Gastrocnemius medialis (tissue), 4 donors: ENCODE measurements at regions of chr17 and their contacts with region 1.

Region 1: DNA sequence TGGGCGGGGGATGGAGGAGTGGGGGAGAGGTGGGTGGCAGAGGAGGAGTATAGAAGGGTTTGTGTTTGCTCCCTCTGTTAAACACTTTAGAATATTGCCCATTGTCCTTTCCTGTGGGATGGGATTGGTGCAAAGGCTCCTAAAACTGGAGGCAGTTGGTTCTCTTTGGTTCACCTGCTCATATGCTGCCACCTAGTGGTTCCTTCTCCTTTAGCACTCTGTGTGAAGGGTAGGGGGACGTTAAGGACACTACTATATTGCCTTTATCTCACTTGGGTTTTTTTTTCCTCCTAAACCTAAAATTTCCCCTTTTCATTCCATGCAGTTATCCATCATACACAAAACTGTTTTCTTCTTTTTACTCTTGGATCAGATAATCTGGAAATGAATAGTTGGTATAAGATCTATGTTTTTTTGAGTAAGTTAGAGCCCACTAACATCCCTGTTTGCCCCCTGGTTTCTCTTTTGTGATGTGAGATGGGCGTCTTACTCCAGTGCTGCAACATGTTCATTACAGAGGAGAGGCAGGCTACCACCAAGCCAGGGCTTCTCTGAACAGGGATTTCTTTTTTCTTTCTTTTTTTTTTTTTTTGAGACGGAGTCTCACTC is 23.8 kb downstream of the SNX11 start:
- DNase-seq: peak; percentile 23 to 43
- ATAC-seq: peak; percentile 87 to 94
- H3K4me3 ChIP-seq: no peak overlapping the region
- H3K27ac ChIP-seq: no peak overlapping the region
- H3K4me1 ChIP-seq: no peaks in the 10 kb centered on the region
- H3K27me3 ChIP-seq: no peaks in the 10 kb centered on the region
- CTCF ChIP-seq: peak; percentile 68 to 83 (median 83)
- POLR2A ChIP-seq: no peak

Region 2: DNA sequence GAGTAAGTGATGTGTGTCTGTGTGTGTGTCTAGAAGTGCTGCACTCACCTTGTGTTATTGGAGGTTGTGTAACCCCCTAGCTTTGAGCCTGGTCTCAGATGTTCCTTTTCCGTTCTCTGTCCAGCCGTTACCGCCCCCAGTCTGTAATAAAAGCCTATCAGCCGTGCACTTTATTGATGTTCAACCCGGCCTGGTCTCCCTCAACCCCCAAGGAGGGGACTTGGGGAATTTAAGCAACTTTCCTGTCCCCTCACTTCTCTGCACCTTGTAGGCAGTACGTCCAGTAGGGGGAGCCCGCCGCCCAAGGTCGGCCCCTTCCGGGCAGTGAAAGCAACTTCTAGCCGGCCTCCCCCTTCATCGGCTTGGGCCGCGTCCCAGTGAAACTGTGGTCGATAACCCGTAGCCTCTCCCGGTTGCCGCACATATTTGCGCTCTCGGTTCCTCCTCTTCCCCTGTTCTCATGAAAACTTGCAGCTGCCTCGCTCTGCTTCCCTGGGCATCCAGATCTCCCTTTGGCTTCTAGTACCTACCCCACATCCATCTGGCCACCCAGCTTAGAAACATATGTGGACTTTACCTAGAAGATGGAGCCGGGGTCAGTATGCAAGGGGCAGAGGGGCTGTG is 182.1 kb before region 1 on chr17:
- in situ Hi-C with region 1: no loop called
- intact Hi-C with region 1: loop called (anchors 1 kb)
- DNase-seq: peak; percentile 59 to 67
- ATAC-seq: peak; percentile 57 to 65
- H3K4me3 ChIP-seq: peak overlapping the region; percentile 31 to 51 (median 43)
- H3K27ac ChIP-seq: peak overlapping the region; percentile 74 to 77 (median 76)
- H3K4me1 ChIP-seq: peaks cover 25 to 28% of the 10 kb centered on the region in 2 donors
- H3K27me3 ChIP-seq: no peaks in the 10 kb centered on the region
- CTCF ChIP-seq: peak; percentile 81 to 93 (median 91)
- POLR2A ChIP-seq: no peak

Region 3: GRCh38 chr17:48024937-48025906 is 106.1 kb before region 1 on chr17:
- in situ Hi-C with region 1: loop called in 1 of 4 experiments (anchors 5 kb)
- intact Hi-C with region 1: loop called (anchors 1 kb)
- DNase-seq: peak; percentile 95 to 96
- ATAC-seq: peak; percentile 82 to 84
- H3K4me3 ChIP-seq: peak overlapping the region; percentile 57 to 66 (median 60)
- H3K27ac ChIP-seq: peak overlapping the region; percentile 77 to 89 (median 81)
- H3K4me1 ChIP-seq: peaks cover 33 to 39% of the 10 kb centered on the region in 2 donors
- H3K27me3 ChIP-seq: no peaks in the 10 kb centered on the region
- CTCF ChIP-seq: peak; percentile 69 to 93 (median 90)
- POLR2A ChIP-seq: peak; percentile 38 to 60

Region 4: GRCh38 chr17:48084932-48085444 is 46.3 kb before region 1 on chr17:
- in situ Hi-C with region 1: loop called in 3 of 4 experiments (anchors 5 to 10 kb)
- intact Hi-C with region 1: no loop called
- DNase-seq: no peak
- ATAC-seq: no peak
- H3K4me3 ChIP-seq: no peak overlapping the region
- H3K27ac ChIP-seq: no peak overlapping the region
- H3K4me1 ChIP-seq: peaks cover 0 to 7% of the 10 kb centered on the region in 2 donors
- H3K27me3 ChIP-seq: no peaks in the 10 kb centered on the region
- CTCF ChIP-seq: no peak
- POLR2A ChIP-seq: no peak

Region 5: DNA sequence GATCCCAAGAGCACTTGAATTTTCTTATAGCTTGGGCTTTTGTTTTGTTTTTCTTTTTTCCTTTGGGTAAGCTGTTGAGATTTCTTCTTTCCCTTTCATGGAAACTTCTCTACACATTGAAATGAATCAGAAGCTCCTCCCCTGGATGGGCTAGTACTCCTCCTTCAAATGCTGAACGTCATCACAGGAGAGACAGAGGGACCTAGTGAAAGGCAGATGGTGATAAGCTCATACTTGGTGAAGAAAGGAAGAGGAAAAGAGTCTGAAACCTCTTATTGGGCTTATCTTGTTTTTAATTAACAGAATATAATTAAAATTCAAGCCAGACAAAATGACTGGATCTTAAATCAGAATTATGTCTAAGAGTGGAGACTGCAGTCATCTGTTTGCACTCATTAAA is 123.6 kb after region 1 on chr17:
- in situ Hi-C with region 1: no loop called
- intact Hi-C with region 1: no loop called
- DNase-seq: no peak
- ATAC-seq: no peak
- H3K4me3 ChIP-seq: no peak overlapping the region
- H3K27ac ChIP-seq: no peak overlapping the region
- H3K4me1 ChIP-seq: no peaks in the 10 kb centered on the region
- H3K27me3 ChIP-seq: peaks cover 0 to 9% (median 0%) of the 10 kb centered on the region in 3 donors
- CTCF ChIP-seq: no peak
- POLR2A ChIP-seq: no peak